ENCODE measurements at regions of chr17 and their contacts with region 1.

Region 1: DNA sequence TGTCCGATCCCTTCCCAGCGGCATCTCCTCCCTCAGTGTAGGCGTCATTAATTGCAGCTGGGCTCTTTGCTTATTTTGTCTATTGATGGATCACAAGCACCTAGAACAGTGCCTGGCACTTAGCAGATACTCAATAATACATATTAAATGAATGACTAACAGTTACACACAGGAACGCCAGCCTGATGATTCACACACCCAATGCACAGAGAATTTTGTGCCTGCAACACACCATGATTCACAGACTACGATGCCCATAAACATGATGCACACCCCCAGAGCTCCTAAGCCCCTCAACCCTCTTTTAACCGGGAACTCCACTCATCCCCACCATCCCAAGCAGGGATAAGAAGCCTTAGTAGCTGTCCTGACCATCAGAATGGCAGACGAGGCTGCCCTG is 66.6 kb upstream of the TMEM97 start:
- DNase-seq: no peak
- H3K4me3 ChIP-seq: no peak overlapping the region
- H3K27ac ChIP-seq: no peak overlapping the region
- H3K4me1 ChIP-seq: peaks cover 3% of the 10 kb centered on the region
- H3K27me3 ChIP-seq: no peaks in the 10 kb centered on the region
- CTCF ChIP-seq: no peak
- POLR2A ChIP-seq: no peak

Region 2: DNA sequence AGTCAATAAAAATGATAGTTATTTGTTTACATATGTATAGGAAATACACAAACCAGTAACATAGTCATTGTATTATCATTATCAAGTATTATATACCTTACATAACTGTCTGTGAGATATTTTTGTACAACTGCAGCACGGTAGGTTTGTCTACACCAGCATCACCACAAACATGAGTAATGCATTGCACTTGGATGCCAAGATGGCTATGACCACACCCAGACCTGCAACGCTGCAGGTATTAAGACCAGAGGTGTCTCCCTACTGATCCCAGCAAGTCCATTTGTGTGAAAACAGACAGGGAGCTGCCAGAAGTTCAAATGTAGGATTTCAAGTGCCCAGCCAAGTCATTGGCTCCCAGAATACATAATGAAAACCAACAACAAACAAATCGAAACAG is 417.9 kb before region 1 on chr17:
- CTCF ChIA-PET with region 1: no interaction called
- POLR2A ChIA-PET with region 1: interaction called, 10 read pairs
- dilution Hi-C with region 1: no loop called
- intact Hi-C with region 1: no loop called
- DNase-seq: no peak
- H3K4me3 ChIP-seq: no peak overlapping the region
- H3K27ac ChIP-seq: no peak overlapping the region
- H3K4me1 ChIP-seq: no peaks in the 10 kb centered on the region
- H3K27me3 ChIP-seq: peaks cover 5 to 10% of the 10 kb centered on the region in 2 experiments
- CTCF ChIP-seq: no peak
- POLR2A ChIP-seq: no peak

Region 3: DNA sequence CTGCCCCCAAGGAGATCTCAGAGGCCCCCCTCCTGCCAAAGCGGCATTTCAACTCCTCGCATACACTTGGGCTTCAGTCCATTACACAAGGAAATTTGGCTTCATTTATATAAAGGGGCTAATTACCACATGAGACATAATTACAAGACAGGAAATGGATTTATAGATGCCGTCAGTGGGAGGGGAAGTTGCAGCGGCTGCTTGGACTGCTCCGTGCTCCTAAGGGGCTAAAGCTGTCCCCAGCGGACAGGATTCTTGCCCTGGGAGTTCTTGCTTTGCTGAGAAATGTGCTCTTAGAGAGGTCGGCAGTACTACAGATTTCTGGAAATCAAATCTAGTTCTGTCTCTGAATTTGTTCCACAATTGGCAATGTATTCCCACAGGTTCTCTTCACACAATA is 267.1 kb before region 1 on chr17:
- CTCF ChIA-PET with region 1: interaction called, 5 read pairs
- POLR2A ChIA-PET with region 1: no interaction called
- dilution Hi-C with region 1: no loop called
- intact Hi-C with region 1: loop called (anchors 5 kb)
- DNase-seq: peak; percentile 72
- H3K4me3 ChIP-seq: no peak overlapping the region
- H3K27ac ChIP-seq: peak overlapping the region; percentile 49
- H3K4me1 ChIP-seq: peaks cover 69% of the 10 kb centered on the region
- H3K27me3 ChIP-seq: no peaks in the 10 kb centered on the region
- CTCF ChIP-seq: no peak
- POLR2A ChIP-seq: no peak

Region 4: GRCh38 chr17:28151001-28151400 is 101.4 kb before region 1 on chr17:
- CTCF ChIA-PET with region 1: no interaction called
- POLR2A ChIA-PET with region 1: no interaction called
- dilution Hi-C with region 1: no loop called
- intact Hi-C with region 1: no loop called
- DNase-seq: no peak
- H3K4me3 ChIP-seq: no peak overlapping the region
- H3K27ac ChIP-seq: no peak overlapping the region
- H3K4me1 ChIP-seq: no peaks in the 10 kb centered on the region
- H3K27me3 ChIP-seq: no peaks in the 10 kb centered on the region
- CTCF ChIP-seq: no peak
- POLR2A ChIP-seq: no peak

Region 5: DNA sequence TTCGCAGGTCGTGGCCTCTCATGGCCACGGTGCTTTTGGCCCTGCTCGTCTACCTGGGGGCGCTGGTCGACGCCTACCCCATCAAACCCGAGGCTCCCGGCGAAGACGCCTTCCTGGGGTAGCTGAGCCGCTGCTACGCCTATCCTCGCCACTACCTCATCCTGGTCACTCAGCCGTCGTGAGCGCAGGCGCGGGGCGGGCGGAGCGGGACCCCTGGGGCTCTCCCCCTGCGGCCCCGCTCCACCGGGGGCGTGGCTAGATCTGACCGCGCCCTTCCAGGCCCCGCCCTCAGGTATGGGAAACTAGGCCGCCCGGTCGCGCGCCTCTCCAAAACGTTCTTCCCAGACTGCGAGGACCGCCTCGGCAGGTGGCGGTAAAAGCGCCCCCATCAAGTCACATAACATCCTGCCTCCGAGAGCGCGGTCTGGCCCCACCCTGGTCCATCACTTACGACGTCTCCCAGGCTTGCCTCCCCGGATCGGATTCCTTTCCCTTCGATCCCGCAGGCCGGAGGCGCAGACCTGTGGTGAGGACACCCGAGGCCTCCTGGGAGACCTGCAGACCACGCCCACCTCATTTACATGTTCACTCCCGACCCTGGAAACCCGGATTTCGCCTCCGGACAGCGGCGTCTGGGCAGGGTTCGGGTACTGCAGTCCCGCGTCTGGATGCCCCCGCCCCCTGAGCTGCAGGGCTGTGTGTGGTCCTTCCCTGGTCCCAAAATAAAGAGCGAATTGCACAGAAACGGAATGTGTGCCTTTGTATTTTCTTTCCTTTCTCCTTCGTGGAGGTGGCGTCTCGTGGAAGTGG is 24.9 kb before region 1 on chr17:
- CTCF ChIA-PET with region 1: interaction called, 18 read pairs
- POLR2A ChIA-PET with region 1: no interaction called
- dilution Hi-C with region 1: no loop called
- intact Hi-C with region 1: no loop called
- DNase-seq: no peak
- H3K4me3 ChIP-seq: peak overlapping the region in 2 of 3 experiments; percentile 17
- H3K27ac ChIP-seq: no peak overlapping the region
- H3K4me1 ChIP-seq: peaks cover 3% of the 10 kb centered on the region
- H3K27me3 ChIP-seq: peaks cover 13 to 27% of the 10 kb centered on the region in 2 experiments
- CTCF ChIP-seq: no peak
- POLR2A ChIP-seq: no peak

Region 6: DNA sequence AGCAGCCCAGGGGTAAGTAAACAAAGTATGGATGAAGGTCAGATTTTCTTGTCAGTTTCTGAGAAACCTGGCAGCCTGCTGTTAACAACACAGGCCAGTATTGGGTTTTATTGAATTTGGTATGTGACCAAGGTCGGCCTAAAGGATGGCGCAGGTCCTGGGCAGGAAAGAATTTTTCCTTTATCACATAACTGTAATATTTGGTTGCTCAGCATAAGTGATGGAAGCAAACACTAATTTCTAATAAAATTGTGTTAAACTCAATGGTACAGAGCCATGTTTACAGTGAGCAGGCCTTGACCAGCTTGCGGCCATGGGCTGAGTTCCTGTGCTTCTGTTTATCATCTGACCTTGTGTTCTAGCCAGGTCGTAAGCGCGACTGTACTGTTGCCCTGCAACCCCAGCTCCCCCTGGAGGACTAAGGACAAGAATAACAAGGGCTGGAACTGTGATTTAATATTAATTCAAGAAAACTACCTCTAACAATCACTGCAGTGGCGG is 94.4 kb after region 1 on chr17:
- CTCF ChIA-PET with region 1: interaction called, 11 read pairs
- POLR2A ChIA-PET with region 1: no interaction called
- dilution Hi-C with region 1: no loop called
- intact Hi-C with region 1: no loop called
- DNase-seq: peak; percentile 90
- H3K4me3 ChIP-seq: no peak overlapping the region
- H3K27ac ChIP-seq: peak overlapping the region; percentile 88
- H3K4me1 ChIP-seq: peaks cover 32% of the 10 kb centered on the region
- H3K27me3 ChIP-seq: no peaks in the 10 kb centered on the region
- CTCF ChIP-seq: peak; percentile 59 to 61
- POLR2A ChIP-seq: no peak

Measured in endothelial cell of umbilical vein (primary cell).